ENCODE measurements at regions of chr3 and their contacts with region 1.

Region 1: GRCh38 chr3:28328188-28329151 is 20.1 kb upstream of the ZCWPW2 start:
- DNase-seq: no peak
- H3K4me3 Mint-ChIP-seq: no peak overlapping the region
- H3K27ac Mint-ChIP-seq: no peak overlapping the region
- H3K4me1 Mint-ChIP-seq: peaks cover 34% of the 10 kb centered on the region
- H3K27me3 Mint-ChIP-seq: no peaks in the 10 kb centered on the region

Region 2: GRCh38 chr3:27590437-27591298 is 737.8 kb before region 1 on chr3:
- intact Hi-C with region 1: loop called (anchors 1 kb)
- DNase-seq: no peak
- H3K4me3 Mint-ChIP-seq: peak overlapping the region; percentile 38
- H3K27ac Mint-ChIP-seq: peak overlapping the region; percentile 81
- H3K4me1 Mint-ChIP-seq: peaks cover 32% of the 10 kb centered on the region
- H3K27me3 Mint-ChIP-seq: no peaks in the 10 kb centered on the region

Region 3: GRCh38 chr3:27721717-27722542 is 606.5 kb before region 1 on chr3 and contains the start of gene EOMES:
- intact Hi-C with region 1: loop called (anchors 1 kb)
- DNase-seq: peak; percentile 72
- H3K4me3 Mint-ChIP-seq: peak within 1 kb of the TSS; percentile 84
- H3K27ac Mint-ChIP-seq: peak within 1 kb of the TSS; percentile 61
- H3K4me1 Mint-ChIP-seq: peaks cover 42% of the 10 kb centered on the region
- H3K27me3 Mint-ChIP-seq: peaks cover 75% of the 10 kb centered on the region
- total RNA-seq, gene EOMES: 5.2 and 5.6 TPM in 2 replicates

Region 4: GRCh38 chr3:28050895-28051294 is 277.6 kb before region 1 on chr3:
- intact Hi-C with region 1: loop called (anchors 1 kb)
- DNase-seq: no peak
- H3K4me3 Mint-ChIP-seq: no peak overlapping the region
- H3K27ac Mint-ChIP-seq: peak overlapping the region; percentile 79
- H3K4me1 Mint-ChIP-seq: peaks cover 26% of the 10 kb centered on the region
- H3K27me3 Mint-ChIP-seq: peaks cover 9% of the 10 kb centered on the region

Region 5: GRCh38 chr3:28109829-28110228 is 218.6 kb before region 1 on chr3:
- intact Hi-C with region 1: no loop called
- DNase-seq: no peak
- H3K4me3 Mint-ChIP-seq: no peak overlapping the region
- H3K27ac Mint-ChIP-seq: no peak overlapping the region
- H3K4me1 Mint-ChIP-seq: no peaks in the 10 kb centered on the region
- H3K27me3 Mint-ChIP-seq: no peaks in the 10 kb centered on the region

Region 6: DNA sequence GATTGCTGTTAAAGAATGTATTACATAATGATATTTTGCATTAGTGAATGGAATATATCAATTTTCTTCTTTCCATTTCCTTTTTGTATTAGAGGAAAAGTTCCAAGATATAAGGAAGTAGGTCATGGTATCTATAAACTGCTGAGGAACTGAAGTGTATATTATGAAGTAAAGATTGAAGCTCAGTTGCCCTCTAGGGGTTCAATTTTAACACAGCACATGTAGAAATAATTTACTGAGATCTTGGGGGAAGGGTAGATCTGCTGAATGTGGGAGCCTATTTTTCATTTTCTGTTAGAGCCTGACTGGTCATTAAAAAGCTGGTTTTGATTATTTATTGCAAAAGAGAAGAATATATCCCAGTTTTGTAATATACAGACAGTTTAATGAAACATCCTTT is 41.9 kb before region 1 on chr3:
- intact Hi-C with region 1: loop called (anchors 2 kb)
- DNase-seq: no peak
- H3K4me3 Mint-ChIP-seq: no peak overlapping the region
- H3K27ac Mint-ChIP-seq: no peak overlapping the region
- H3K4me1 Mint-ChIP-seq: peaks cover 15% of the 10 kb centered on the region
- H3K27me3 Mint-ChIP-seq: no peaks in the 10 kb centered on the region

Measured in activated T-helper 2 cell treated with anti-CD3 and anti-CD28 coated beads, Interferon-gamma antibody, Interleukin-2, Interleukin-4, amounts not matched to agents 10 μg/mL and 5 μg/mL and 100 μg/mL, durations not matched to agents 14 hours and 24 hours and 36 hours (primary cell).